ENCODE measurements at regions of chr6 and their contacts with region 1.

Region 1: DNA sequence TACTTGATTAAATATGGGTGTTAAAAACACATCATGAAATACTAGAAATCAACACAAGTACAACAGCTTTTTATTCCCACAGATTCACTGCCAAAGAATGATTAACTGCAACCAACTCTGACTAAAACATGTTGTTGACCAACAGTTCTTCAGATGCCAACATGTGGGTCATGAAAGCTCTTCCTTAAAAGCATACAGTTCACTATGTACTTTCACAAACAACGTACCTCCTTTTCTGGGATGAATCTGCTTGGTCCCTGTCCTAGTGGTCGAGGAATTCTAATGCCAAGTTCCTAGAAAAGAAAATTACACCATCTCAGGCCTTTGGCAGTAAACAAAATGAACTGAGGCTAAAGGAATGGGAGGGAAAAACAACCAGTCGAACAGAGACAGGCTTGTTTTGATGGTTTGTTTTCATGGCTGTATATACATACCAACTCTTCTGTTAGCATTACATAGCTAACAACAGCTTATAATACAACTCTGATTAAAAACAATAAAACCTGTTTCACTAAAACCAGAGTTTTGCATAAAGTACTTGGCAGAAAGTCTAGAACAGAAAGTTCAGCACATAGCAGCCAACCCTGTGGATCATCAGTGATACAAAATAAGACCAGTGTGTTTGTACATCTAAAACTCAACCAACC is 92.5 kb downstream of the SESN1 start:
- DNase-seq: peak; percentile 58 to 75
- ATAC-seq: peak; percentile 93 to 96
- H3K4me3 ChIP-seq: peak overlapping the region in 3 of 4 donors; percentile 23 to 35 (median 33)
- H3K27ac ChIP-seq: peak overlapping the region; percentile 92 to 98 (median 95)
- H3K4me1 ChIP-seq: peaks cover 87 to 92% of the 10 kb centered on the region in 2 donors
- H3K27me3 ChIP-seq: no peaks in the 10 kb centered on the region
- CTCF ChIP-seq: no peak
- POLR2A ChIP-seq: peak in 1 of 2 donors; percentile 43

Region 2: GRCh38 chr6:108655806-108656651 is 346.1 kb before region 1 on chr6:
- in situ Hi-C with region 1: no loop called
- intact Hi-C with region 1: loop called (anchors 1 kb)
- DNase-seq: peak; percentile 52 to 69
- ATAC-seq: peak; percentile 37 to 60
- H3K4me3 ChIP-seq: peak overlapping the region; percentile 50 to 67 (median 62)
- H3K27ac ChIP-seq: peak overlapping the region; percentile 89 to 94 (median 92)
- H3K4me1 ChIP-seq: peaks cover 77 to 85% of the 10 kb centered on the region in 2 donors
- H3K27me3 ChIP-seq: no peaks in the 10 kb centered on the region
- CTCF ChIP-seq: no peak
- POLR2A ChIP-seq: peak; percentile 33 to 75

Region 3: GRCh38 chr6:108947114-108947854 is 54.9 kb before region 1 on chr6:
- in situ Hi-C with region 1: no loop called
- intact Hi-C with region 1: loop called (anchors 2 kb)
- DNase-seq: no peak
- ATAC-seq: peak in 1 of 2 donors; percentile 14
- H3K4me3 ChIP-seq: no peak overlapping the region
- H3K27ac ChIP-seq: peak overlapping the region; percentile 86 to 91 (median 88)
- H3K4me1 ChIP-seq: peaks cover 66 to 68% of the 10 kb centered on the region in 2 donors
- H3K27me3 ChIP-seq: no peaks in the 10 kb centered on the region
- CTCF ChIP-seq: no peak
- POLR2A ChIP-seq: peak in 1 of 2 donors; percentile 23

Region 4: GRCh38 chr6:108968325-108969316 is 33.6 kb before region 1 on chr6:
- in situ Hi-C with region 1: no loop called
- intact Hi-C with region 1: loop called (anchors 2 kb)
- DNase-seq: no peak
- ATAC-seq: no peak
- H3K4me3 ChIP-seq: no peak overlapping the region
- H3K27ac ChIP-seq: peak overlapping the region; percentile 71 to 82 (median 76)
- H3K4me1 ChIP-seq: peaks cover 35 to 39% of the 10 kb centered on the region in 2 donors
- H3K27me3 ChIP-seq: no peaks in the 10 kb centered on the region
- CTCF ChIP-seq: no peak
- POLR2A ChIP-seq: no peak

Region 5: DNA sequence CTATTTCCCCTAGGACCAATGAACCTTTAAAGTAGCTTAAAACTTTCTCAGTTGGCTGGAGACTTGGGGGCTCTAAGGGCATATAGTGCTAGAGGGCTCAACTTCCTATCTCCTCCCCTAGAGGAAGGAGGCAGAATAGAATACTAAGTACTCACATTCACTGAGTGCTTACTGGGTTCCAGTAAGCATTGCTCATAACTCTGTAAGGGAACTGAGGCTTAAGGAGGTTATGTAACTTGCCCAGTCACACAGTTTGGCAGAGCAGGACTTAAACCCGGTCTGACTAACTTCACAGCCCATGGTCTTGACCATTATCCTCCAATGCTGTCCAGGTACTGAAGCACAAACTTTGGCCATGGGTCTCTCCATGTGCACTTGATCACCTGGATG is 80.0 kb after region 1 on chr6:
- in situ Hi-C with region 1: no loop called
- intact Hi-C with region 1: loop called (anchors 2 kb)
- DNase-seq: peak; percentile 24 to 63
- ATAC-seq: peak; percentile 66 to 67
- H3K4me3 ChIP-seq: peak overlapping the region; percentile 1 to 39 (median 22)
- H3K27ac ChIP-seq: peak overlapping the region; percentile 93 to 98 (median 96)
- H3K4me1 ChIP-seq: peaks cover 82 to 83% of the 10 kb centered on the region in 2 donors
- H3K27me3 ChIP-seq: no peaks in the 10 kb centered on the region
- CTCF ChIP-seq: peak in 3 of 5 experiments; percentile 50 to 60 (median 53)
- POLR2A ChIP-seq: peak; percentile 42 to 68

Measured in gastrocnemius medialis (tissue), 4 donors.